ENCODE measurements at regions of chr9 and their contacts with region 1.

Region 1: DNA sequence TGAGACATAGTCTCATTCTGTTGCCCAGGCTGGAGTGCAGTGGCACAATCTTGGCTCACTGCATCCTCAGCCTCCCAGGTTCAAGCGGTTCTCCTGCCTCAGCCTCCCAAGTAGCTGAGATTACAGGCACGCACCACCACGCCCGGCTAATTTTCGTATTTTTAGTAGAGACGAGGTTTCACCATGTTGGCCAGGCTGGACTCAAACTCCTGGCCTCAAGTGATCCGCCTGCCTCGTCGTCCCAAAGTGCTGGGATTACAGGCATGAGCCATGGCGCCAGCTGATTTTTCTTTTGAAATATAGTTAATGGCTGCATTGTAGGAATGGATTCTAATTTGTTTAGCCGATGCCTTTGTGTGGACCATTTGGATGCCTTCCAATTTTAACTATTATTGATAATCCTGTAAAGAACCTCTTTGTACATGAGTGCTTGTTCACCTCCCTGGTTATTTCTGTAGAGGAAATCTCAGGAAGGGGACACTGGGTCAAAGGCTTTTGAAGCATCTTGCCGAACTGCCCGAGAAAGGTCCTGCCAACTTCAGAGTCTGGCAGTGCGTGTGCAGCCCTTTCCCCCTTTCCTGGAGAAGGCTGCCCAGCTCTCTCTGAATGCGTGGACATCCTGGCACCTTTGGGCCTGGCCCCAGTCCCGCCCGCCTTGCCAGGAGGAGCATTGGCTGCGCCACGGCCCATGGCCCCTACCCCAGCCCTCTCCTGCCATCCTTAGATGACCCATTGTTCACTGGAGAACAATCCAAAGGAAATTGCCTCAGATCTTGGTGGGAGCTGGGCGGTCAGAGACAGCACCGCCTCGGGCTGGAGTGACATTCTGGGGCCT is 8.9 kb upstream of the NUP214 start:
- DNase-seq: no peak
- H3K4me3 ChIP-seq: no peak overlapping the region
- H3K27ac ChIP-seq: peak overlapping the region in 1 of 2 donors; percentile 26
- H3K4me1 ChIP-seq: peaks cover 0 to 8% (median 0%) of the 10 kb centered on the region in 4 donors
- H3K27me3 ChIP-seq: no peaks in the 10 kb centered on the region
- CTCF ChIP-seq: no peak

Region 2: DNA sequence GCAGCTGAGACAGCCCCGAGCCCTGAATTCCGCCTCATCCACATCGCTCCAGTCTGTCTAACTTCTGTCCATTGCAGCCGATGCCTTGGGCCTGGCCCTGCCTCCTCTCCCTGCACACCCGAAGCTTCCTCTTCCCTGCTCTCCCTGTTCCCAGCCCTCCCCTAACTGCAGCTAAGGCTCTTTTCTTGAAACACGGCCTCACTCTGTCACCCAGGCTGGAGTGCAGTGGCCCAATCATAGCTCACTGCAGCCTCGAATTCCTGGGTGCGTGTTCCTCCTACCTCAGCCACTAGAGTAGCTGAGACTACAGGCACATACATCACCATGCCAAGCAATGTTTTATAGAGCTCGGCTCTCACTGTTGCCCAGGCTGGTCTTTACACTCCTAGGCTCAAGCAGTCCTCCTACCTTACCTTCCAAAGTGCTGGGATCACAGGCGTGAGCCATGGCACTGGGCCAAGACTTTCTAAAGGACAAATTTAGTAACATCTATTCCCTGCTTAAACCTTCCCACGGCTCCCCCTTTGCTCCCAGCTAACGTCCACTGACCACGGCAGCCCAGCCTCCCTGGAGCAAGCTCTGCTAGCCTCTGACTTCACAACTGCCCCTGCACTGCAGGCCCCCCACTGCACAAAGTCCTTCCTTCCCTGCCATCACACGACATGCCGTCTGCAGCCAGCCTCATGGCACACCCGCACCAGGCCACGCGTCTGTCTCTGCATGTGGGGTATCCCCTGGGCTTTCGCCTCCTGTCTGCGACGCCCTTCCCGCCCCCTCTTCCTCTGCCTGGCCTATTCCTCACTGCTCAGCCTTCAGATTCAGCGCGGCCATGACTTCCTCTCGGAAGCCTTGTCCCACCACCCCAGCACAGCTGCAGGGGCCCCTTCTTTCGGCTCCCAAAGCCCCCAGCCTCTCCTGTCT is 78.9 kb before region 1 on chr9:
- intact Hi-C with region 1: no loop called
- DNase-seq: no peak
- H3K4me3 ChIP-seq: no peak overlapping the region
- H3K27ac ChIP-seq: peak overlapping the region; percentile 53 to 66
- H3K4me1 ChIP-seq: peaks cover 0 to 20% (median 18%) of the 10 kb centered on the region in 4 donors
- H3K27me3 ChIP-seq: no peaks in the 10 kb centered on the region
- CTCF ChIP-seq: no peak

Region 3: GRCh38 chr9:131068076-131068816 is 48.3 kb before region 1 on chr9:
- intact Hi-C with region 1: loop called (anchors 5 kb)
- DNase-seq: no peak
- H3K4me3 ChIP-seq: no peak overlapping the region
- H3K27ac ChIP-seq: no peak overlapping the region
- H3K4me1 ChIP-seq: no peaks in the 10 kb centered on the region
- H3K27me3 ChIP-seq: peaks cover 0 to 33% of the 10 kb centered on the region in 2 donors
- CTCF ChIP-seq: no peak